ENCODE measurements at regions of chr3 and their contacts with region 1.

Region 1: GRCh38 chr3:161117646-161118045 is 12.5 kb upstream of the B3GALNT1 start:
- DNase-seq: no peak
- H3K4me3 ChIP-seq: no peak overlapping the region
- H3K27ac ChIP-seq: no peak overlapping the region
- H3K4me1 ChIP-seq: no peaks in the 10 kb centered on the region
- H3K27me3 ChIP-seq: no peaks in the 10 kb centered on the region
- CTCF ChIP-seq: no peak
- POLR2A ChIP-seq: no peak

Region 2: DNA sequence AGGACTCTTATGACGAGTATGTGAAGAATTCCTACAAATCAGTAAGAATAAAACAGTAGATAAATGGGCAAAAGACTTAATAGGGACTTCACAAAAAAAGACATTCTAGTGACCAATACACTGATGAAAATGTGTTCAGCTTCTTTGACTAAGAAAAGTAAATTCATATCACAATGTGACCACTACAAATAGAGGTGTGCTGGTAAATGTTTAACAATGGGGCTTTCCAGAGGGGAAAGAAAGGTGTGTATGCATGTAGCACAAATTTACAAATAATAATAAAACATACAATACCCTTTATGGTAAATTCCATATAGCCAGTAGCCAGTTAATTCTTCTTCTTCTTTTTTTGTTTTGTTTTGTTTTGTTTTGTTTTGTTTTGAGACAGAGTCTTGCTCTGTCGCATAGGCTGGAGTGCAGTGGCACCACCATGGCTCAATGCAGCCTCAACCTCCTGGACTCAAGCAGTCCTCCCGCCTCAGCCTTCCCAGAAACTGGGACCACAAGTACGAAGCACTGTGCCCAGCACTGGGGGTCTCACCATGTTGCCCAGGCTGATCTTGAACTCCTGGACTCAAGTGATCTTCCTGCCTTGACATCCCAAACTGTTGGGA is 85.9 kb after region 1 on chr3:
- intact Hi-C with region 1: loop called (anchors 10 kb)
- DNase-seq: no peak
- H3K4me3 ChIP-seq: no peak overlapping the region
- H3K27ac ChIP-seq: no peak overlapping the region
- H3K4me1 ChIP-seq: no peaks in the 10 kb centered on the region
- H3K27me3 ChIP-seq: no peaks in the 10 kb centered on the region
- CTCF ChIP-seq: no peak
- POLR2A ChIP-seq: no peak

Measured in thyroid gland (tissue), 4 donors.